Gastrocnemius medialis (tissue), 4 donors: ENCODE measurements at regions of chr14 and their contacts with region 1.

Region 1: GRCh38 chr14:100662879-100663760 is 63.6 kb upstream of the DLK1 start:
- DNase-seq: peak in 1 of 2 donors; percentile 32
- ATAC-seq: peak in 1 of 2 donors; percentile 35
- H3K4me3 ChIP-seq: no peak overlapping the region
- H3K27ac ChIP-seq: no peak overlapping the region
- H3K4me1 ChIP-seq: peaks cover 4 to 12% of the 10 kb centered on the region in 2 donors
- H3K27me3 ChIP-seq: peaks cover 23 to 44% (median 28%) of the 10 kb centered on the region in 3 donors
- CTCF ChIP-seq: peak; percentile 76 to 90 (median 79)
- POLR2A ChIP-seq: no peak

Region 2: DNA sequence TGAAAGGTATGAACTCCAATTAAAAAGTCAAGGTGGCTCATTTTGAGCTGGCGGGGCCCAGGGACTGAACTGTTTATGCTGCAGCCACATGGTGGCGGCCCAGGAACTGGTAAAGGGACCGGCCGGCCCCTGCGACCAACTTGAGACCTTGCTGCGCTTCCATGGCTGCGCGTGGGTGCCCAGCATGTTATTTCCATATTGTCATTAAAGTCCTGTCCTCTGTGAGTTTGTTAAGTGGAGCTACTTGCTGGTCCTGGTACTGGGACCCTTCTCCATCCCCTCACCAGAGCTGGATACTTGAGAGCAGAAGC is 138.2 kb before region 1 on chr14:
- in situ Hi-C with region 1: no loop called
- intact Hi-C with region 1: no loop called
- DNase-seq: no peak
- ATAC-seq: no peak
- H3K4me3 ChIP-seq: no peak overlapping the region
- H3K27ac ChIP-seq: no peak overlapping the region
- H3K4me1 ChIP-seq: no peaks in the 10 kb centered on the region
- H3K27me3 ChIP-seq: no peaks in the 10 kb centered on the region
- CTCF ChIP-seq: peak in 1 of 5 experiments; percentile 17
- POLR2A ChIP-seq: no peak

Region 3: DNA sequence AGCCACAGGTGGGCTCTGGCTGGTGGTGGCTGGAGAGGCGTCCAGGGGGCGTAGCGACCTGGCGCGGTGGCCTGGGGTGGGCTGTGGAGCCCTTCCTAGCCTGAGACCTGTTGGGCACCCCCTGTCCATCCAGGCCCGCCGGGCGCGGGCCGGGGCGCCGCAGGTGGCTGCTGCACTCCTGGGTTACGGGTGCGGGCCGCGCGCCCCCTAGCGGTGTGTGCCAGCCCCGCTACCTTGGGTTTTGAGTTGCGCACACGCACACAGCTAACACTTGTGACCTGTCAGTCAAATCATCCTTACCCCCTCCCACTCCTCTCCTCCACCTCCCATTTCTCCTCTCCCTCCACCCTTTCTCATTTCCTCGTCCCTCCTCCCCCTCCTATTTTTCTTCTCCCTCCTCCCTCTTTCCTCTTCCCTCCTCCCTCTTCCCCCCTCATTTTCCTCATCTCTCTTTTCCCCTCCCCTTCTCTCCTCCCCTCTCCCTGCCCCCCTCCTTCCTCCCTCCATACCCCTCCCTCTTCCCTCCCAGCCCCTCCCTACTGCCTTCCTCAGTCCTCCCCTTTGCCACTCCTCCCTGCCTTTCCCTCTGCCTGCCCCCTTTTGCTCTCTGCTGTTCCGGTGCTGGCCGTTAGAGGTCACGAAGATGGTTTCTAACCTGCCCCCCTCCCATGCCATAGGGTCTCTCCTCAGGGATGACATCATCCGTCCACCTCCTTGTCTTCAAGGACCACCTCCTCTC is 165.1 kb after region 1 on chr14:
- in situ Hi-C with region 1: no loop called
- intact Hi-C with region 1: loop called (anchors 10 kb)
- DNase-seq: no peak
- ATAC-seq: no peak
- H3K4me3 ChIP-seq: peak overlapping the region in 1 of 4 donors; percentile 36
- H3K27ac ChIP-seq: no peak overlapping the region
- H3K4me1 ChIP-seq: no peaks in the 10 kb centered on the region
- H3K27me3 ChIP-seq: peaks cover 23 to 42% (median 42%) of the 10 kb centered on the region in 3 donors
- CTCF ChIP-seq: peak in 3 of 5 experiments; percentile 14 to 35 (median 15)
- POLR2A ChIP-seq: no peak

Region 4: DNA sequence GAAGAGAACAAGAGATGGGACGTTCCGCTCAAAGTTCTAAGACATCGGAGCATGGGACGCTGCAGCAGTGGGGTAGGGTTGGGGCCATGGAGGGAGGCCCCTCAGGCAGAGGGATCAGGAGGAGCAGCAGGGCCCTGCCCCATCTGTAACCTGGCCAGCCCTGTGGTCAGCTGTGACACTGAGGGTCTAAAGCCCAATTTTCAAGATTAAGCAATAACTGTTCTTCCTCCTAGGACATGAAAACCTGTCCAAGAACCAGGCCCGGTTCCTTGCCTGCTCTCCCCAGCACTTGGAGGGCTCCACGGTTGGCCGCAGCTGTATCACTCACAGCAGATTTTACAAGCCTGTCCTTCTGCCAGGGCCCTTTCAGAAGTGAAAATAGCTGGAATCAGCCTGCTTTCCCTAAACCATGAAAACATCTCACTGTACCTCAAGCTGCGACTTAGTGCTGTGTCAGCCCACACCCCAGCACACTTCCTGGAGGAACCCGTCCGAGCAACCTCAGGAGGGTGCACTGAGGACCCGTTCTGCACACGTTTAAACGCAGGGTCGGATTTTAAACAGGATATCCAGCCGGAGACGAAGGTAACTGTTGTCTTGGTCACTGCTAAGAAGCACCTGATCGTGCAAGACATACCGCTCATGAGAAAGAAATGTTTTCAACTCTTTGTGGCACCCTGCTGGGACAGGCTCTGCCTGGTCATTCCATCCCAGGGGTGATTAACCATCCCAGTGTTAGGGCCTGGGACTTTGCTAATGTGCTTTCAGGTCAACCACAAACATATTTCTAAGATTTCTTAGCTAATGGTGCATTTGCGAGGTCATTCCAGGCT is 696.3 kb after region 1 on chr14:
- in situ Hi-C with region 1: no loop called
- intact Hi-C with region 1: loop called (anchors 10 kb)
- DNase-seq: peak; percentile 52 to 75
- ATAC-seq: peak; percentile 53 to 55
- H3K4me3 ChIP-seq: no peak overlapping the region
- H3K27ac ChIP-seq: peak overlapping the region; percentile 47 to 66 (median 56)
- H3K4me1 ChIP-seq: peaks cover 0 to 3% of the 10 kb centered on the region in 2 donors
- H3K27me3 ChIP-seq: peaks cover 0 to 4% (median 4%) of the 10 kb centered on the region in 3 donors
- CTCF ChIP-seq: no peak
- POLR2A ChIP-seq: no peak

Region 5: DNA sequence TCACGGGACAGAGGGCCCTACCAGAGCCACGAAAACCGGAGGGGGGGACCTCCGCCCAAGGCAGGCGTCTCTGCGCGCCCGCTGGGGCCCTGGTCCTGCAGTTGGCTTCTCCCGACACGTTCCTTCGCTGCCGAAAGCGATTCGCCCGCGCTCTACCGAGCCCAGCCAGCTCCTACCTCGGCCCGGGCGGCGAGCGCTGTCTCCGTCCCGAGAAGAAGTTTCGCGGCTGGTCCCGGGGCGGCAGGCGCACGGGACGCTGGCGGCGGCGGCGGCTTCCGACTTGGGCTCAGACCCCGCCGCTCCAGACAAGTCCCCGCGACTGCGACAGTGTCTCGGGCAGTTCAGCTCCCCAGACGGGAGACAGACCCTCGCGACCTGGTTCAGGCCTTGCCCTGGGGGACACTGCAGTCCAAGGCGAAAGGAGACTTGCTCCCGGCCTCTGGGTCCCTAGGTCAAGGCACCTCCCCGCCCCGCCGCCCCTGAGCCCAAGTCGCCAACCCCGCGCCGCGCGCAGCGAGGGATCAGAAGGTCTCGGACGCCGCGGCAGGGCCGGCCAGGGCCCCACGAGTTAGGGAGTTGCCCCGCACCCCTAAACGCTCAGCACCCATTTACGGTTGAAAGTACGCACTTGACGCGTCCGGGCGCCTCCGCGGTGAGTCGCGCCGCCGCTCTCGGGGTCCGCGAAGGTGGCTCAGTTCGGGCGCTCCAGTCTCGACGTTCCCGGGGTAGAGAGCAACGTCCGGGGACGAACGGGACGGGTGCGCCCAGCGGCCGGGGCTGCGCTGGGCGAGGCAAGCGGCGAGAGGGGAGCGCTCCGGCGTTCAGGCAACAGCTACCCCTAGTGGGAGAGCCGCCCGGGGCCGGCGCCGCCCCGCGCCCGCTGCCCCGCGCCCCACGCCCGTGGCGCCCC is 896.8 kb after region 1 on chr14:
- in situ Hi-C with region 1: no loop called
- intact Hi-C with region 1: loop called (anchors 10 kb)
- DNase-seq: no peak
- ATAC-seq: peak; percentile 42 to 48
- H3K4me3 ChIP-seq: peak overlapping the region in 3 of 4 donors; percentile 35 to 50 (median 45)
- H3K27ac ChIP-seq: peak overlapping the region; percentile 56 to 61 (median 59)
- H3K4me1 ChIP-seq: no peaks in the 10 kb centered on the region
- H3K27me3 ChIP-seq: peaks cover 41 to 75% (median 58%) of the 10 kb centered on the region in 3 donors
- CTCF ChIP-seq: no peak
- POLR2A ChIP-seq: no peak

Region 6: DNA sequence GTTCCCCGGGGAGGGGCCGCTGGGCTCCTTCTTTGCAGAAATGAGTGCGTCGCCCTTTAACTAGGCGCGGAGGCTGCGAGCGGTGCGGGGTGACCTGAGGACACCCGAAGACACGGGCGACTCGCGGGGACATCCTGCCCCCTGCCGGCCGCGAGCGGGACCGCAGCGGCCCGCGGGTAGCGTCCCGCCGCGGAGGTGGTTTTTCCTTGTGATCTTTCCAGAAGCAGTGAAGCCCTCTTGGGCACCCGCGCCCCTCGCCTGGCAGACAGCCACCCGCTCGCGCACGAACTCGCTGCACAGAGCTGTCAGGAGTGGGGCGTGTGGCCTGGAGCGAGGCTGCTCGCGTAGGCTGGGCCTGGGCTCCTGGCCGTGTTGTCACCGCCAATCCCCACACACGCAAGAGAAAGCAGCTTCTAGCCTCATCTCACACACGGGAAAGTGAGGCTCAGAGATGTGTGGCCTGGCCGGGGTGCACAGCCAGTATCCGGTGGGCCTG is 965.4 kb after region 1 on chr14:
- in situ Hi-C with region 1: no loop called
- intact Hi-C with region 1: loop called (anchors 2 kb)
- DNase-seq: peak; percentile 41 to 62
- ATAC-seq: peak; percentile 74 to 93
- H3K4me3 ChIP-seq: peak overlapping the region; percentile 23 to 48 (median 40)
- H3K27ac ChIP-seq: no peak overlapping the region
- H3K4me1 ChIP-seq: peaks cover 6 to 8% of the 10 kb centered on the region in 2 donors
- H3K27me3 ChIP-seq: no peaks in the 10 kb centered on the region
- CTCF ChIP-seq: peak; percentile 90 to 99 (median 95)
- POLR2A ChIP-seq: no peak